Dendritic cell treated with granulocyte-macrophage colony-stimulating factor and Interleukin-4, amounts not matched to agents 40 ng/mL and 50 ng/mL, for 4 days (primary cell): ENCODE measurements at regions of chr3 and their contacts with region 1.

Region 1: GRCh38 chr3:194404365-194405140 is 5.5 kb upstream of the GP5 start:
- H3K4me3 Mint-ChIP-seq: no peak overlapping the region
- H3K27ac Mint-ChIP-seq: no peak overlapping the region
- H3K4me1 Mint-ChIP-seq: peaks cover 5% of the 10 kb centered on the region
- H3K27me3 Mint-ChIP-seq: peaks cover 6% of the 10 kb centered on the region

Region 2: DNA sequence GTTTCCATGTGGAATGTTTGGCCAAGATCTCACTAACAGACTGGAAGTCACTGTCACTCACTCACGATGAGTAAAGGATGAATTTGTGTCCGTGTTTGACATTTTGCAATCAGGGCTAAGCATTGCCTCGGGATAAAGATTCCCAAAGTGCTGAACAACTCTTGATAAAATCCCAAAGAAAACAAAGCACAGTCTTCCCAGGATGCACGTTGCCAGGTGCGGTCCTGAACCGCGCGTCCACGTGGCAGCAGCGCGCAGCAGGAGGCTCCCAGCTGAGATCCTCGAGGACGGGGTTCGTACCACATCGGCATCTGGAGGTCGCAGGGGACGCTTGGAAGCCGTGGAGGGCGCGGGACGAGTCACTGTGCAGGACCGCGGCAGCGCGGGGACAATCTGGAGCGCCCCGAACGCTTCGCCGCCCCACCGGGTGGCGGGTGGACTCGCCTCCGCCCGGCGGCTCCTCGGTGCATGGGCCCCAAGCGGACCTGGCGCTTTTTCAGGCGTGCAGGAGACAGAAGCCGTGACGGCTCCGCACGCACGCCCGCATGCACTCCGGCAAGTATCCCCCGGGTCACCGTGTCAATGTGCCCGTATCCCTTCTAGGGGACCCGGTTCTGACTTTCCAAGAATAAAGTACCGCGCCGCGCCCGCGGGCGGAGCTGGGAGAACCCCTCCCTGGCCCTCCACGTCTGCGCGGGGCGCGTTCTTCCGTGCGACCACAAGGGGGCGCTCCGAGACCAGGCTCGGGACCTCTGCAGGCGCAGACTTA is 71.2 kb before region 1 on chr3:
- intact Hi-C with region 1: loop called (anchors 2 kb)
- H3K4me3 Mint-ChIP-seq: peak overlapping the region; percentile 76
- H3K27ac Mint-ChIP-seq: no peak overlapping the region
- H3K4me1 Mint-ChIP-seq: peaks cover 20% of the 10 kb centered on the region
- H3K27me3 Mint-ChIP-seq: peaks cover 60% of the 10 kb centered on the region